ENCODE measurements at regions of chr9 and their contacts with region 1.

Region 1: DNA sequence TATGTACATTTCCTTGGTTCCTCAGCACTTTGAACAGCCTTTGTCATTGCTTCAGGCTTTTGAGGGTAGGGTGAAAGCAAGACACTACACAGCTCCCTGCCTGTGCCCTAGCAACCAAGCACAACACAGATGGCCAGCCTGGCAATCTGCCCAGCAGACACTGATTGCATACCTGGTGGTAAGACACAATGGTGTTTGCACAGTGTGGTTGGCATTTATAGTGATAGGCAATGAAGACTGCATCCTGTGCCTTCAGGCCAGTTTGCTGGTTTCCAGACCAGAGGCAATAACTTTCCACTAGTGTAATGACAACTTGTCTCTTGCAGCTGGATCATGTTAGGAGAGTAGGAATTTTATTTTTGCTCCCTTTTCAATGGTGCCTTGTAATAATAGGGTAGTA is 144.5 kb upstream of the TNC start:
- DNase-seq: peak; percentile 99
- H3K4me3 ChIP-seq: no peak overlapping the region
- H3K27ac ChIP-seq: peak overlapping the region; percentile 60
- H3K4me1 ChIP-seq: peaks cover 49% of the 10 kb centered on the region
- H3K27me3 ChIP-seq: no peaks in the 10 kb centered on the region
- CTCF ChIP-seq: no peak

Region 2: DNA sequence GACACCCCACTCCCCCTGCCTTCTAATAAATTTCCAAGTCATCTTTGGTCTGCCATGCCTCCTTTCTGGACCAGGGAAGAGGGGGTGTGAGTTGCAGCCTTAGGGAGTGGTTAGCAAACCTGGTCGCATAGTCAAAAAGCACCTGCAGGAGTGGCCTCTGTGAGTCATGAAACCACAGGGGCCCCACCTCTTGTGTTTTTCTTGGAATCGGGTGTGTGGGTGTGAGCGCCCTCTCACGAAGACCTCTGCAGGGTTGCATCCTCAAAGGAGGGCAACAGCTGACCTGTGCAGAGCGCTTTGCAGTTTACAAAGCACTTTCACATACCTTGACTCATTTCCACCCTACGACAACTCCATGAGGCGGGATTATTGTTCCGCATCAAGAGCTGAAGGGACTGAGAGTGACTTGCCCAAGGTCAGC is 543.7 kb before region 1 on chr9:
- CTCF ChIA-PET with region 1: no interaction called
- POLR2A ChIA-PET with region 1: no interaction called
- intact Hi-C with region 1: loop called (anchors 10 kb)
- DNase-seq: peak; percentile 94 to 98
- H3K4me3 ChIP-seq: no peak overlapping the region
- H3K27ac ChIP-seq: peak overlapping the region; percentile 50
- H3K4me1 ChIP-seq: peaks cover 25% of the 10 kb centered on the region
- H3K27me3 ChIP-seq: no peaks in the 10 kb centered on the region
- CTCF ChIP-seq: no peak; the same call in 1 of the 2 replicates

Region 3: GRCh38 chr9:115022760-115023434 is 239.6 kb before region 1 on chr9:
- CTCF ChIA-PET with region 1: no interaction called
- POLR2A ChIA-PET with region 1: no interaction called
- intact Hi-C with region 1: loop called (anchors 1 kb)
- DNase-seq: no peak
- H3K4me3 ChIP-seq: no peak overlapping the region
- H3K27ac ChIP-seq: no peak overlapping the region
- H3K4me1 ChIP-seq: peaks cover 14% of the 10 kb centered on the region
- H3K27me3 ChIP-seq: no peaks in the 10 kb centered on the region
- CTCF ChIP-seq: no peak

Region 4: DNA sequence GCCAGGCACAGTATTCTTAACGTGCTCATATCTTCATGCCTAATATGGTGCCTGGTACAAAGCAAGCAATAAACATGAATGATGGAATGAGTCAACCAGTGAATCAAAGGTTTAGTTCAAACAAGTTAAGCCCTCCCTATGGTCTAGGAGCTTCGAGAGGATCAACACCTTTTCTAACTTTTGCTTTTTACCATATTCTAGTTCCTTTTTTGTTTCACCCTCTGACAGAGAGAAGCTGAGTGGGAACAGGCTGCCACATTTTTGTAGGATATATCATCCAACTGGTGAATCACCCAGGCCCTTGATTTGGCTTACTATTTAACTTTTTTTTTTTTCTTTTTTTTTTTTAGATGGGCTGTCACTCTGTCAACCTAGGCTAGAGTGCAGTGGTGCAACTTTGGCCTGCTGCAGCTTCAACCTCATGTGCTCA is 105.2 kb before region 1 on chr9:
- CTCF ChIA-PET with region 1: no interaction called
- POLR2A ChIA-PET with region 1: no interaction called
- intact Hi-C with region 1: loop called (anchors 5 kb)
- DNase-seq: peak; percentile 41 to 84
- H3K4me3 ChIP-seq: no peak overlapping the region
- H3K27ac ChIP-seq: peak overlapping the region; percentile 43
- H3K4me1 ChIP-seq: peaks cover 15% of the 10 kb centered on the region
- H3K27me3 ChIP-seq: no peaks in the 10 kb centered on the region
- CTCF ChIP-seq: no peak

Region 5: DNA sequence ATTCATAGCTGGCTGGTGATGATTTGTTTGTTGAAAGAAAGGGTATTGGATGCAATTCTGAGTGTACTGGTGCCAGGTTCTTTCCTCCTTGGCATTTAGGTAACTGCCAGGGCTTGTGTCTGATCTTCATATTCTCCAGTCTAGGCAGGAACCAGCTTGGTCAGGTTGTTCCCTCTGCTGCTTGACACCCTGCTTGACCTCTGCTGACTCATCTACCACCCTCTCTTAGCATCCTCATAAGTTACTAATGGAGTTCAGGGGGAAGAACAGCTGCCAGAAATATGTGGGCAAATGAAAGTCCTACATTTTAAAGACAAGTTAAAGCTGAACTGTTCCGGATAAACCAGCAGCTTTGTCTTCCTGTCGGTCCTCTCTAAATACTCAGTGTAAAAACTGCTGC is 28.4 kb before region 1 on chr9:
- CTCF ChIA-PET with region 1: no interaction called
- POLR2A ChIA-PET with region 1: no interaction called
- intact Hi-C with region 1: loop called (anchors 2 kb)
- DNase-seq: peak; percentile 69 to 85
- H3K4me3 ChIP-seq: no peak overlapping the region
- H3K27ac ChIP-seq: 0 out of 2 replicates have a peak overlapping the region, but pooled peaks have one; percentile 24
- H3K4me1 ChIP-seq: peaks cover 18% of the 10 kb centered on the region
- H3K27me3 ChIP-seq: no peaks in the 10 kb centered on the region
- CTCF ChIP-seq: no peak

Region 6: DNA sequence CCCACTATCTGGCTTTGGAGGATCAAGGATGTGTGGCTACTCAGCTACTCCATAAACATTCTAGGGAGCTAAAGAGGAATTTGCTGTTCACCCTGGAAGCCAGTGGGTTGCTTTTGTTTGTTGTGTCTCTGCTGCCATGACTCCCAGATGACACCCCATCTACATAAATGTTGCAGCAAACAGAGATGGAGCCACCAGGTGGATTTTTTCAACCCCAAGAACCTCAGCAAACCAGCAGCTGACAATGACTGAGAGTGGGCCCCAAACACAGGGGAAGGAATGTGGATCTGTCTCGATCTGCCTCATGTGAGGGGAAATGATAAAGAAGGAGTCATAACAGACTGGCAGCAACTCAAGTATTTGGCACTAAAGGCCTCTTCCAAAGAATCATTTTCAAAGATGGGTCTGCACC is 11.8 kb before region 1 on chr9:
- CTCF ChIA-PET with region 1: no interaction called
- POLR2A ChIA-PET with region 1: no interaction called
- intact Hi-C with region 1: loop called (anchors 1 kb)
- DNase-seq: peak in 1 of 2 experiments; percentile 30
- H3K4me3 ChIP-seq: no peak overlapping the region
- H3K27ac ChIP-seq: no peak overlapping the region
- H3K4me1 ChIP-seq: no peaks in the 10 kb centered on the region
- H3K27me3 ChIP-seq: no peaks in the 10 kb centered on the region
- CTCF ChIP-seq: no peak

Region 7: DNA sequence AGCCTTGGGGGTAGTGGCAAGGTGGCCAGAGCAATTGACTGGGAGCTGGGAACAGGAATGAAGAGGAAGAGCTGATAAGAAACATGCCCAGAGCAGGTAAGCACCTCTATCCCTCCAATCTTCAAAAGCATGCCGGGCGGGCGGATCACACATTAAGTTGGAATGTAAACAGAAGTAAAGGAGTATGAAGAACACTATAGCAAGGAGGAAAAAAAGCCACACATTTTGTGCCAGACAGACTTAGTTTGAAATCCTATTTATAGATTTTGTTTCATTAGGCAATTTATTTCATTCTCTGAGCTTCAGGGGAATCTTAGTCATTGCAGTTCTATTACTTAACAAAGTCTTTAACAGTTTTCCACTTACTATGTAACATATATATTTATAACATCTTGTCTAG is 29.4 kb after region 1 on chr9:
- CTCF ChIA-PET with region 1: no interaction called
- POLR2A ChIA-PET with region 1: no interaction called
- intact Hi-C with region 1: loop called (anchors 1 kb)
- DNase-seq: peak; percentile 79 to 85
- H3K4me3 ChIP-seq: no peak overlapping the region
- H3K27ac ChIP-seq: no peak overlapping the region
- H3K4me1 ChIP-seq: peaks cover 18% of the 10 kb centered on the region
- H3K27me3 ChIP-seq: no peaks in the 10 kb centered on the region
- CTCF ChIP-seq: no peak

Region 8: GRCh38 chr9:117233016-117233415 is 1970.5 kb after region 1 on chr9:
- CTCF ChIA-PET with region 1: no interaction called
- POLR2A ChIA-PET with region 1: no interaction called
- intact Hi-C with region 1: no loop called
- DNase-seq: no peak
- H3K4me3 ChIP-seq: no peak overlapping the region
- H3K27ac ChIP-seq: no peak overlapping the region
- H3K4me1 ChIP-seq: no peaks in the 10 kb centered on the region
- H3K27me3 ChIP-seq: peaks cover 23% of the 10 kb centered on the region; the same call in 1 of the 2 replicates
- CTCF ChIP-seq: no peak